ENCODE measurements at regions of chr1 and their contacts with region 1.

Region 1: DNA sequence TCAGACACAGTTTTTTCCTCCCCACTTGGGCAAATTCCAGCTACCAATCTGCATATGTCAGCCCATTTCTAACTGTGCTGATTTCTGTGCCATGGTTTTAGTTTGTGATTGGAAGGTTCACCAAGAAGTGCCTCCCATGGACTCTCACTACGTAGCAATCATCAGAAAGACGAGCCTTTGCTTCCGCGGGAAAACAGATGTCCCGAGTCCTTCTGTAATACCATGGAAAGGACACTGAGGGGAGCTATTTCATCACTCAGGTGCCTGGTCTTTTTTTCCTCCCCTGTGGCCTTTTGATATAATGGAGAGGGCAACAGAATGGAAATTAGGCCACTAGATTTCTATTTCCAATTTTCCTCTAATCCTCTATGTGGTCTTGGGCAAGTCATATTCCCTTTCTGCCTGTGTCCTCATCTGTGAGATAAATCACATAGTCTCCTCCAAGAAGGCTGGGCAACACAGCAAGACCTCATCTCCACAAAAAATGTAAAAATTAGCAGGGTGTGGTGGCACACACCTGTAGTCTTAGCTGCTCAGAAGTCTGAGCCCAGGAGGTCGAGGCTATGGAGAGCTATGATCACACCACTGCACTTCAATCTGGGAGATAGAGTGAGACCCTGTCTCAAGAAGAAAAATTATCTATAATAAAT is 24.8 kb downstream of the LEMD1 start:
- DNase-seq: peak; percentile 19
- H3K4me3 ChIP-seq: no peak overlapping the region
- H3K27ac ChIP-seq: no peak overlapping the region
- H3K4me1 ChIP-seq: no peaks in the 10 kb centered on the region
- H3K27me3 ChIP-seq: peaks cover 7% of the 10 kb centered on the region
- CTCF ChIP-seq: peak; percentile 52 to 86 (median 73)
- EP300 ChIP-seq: no peak
- POLR2A ChIP-seq: no peak

Region 2: DNA sequence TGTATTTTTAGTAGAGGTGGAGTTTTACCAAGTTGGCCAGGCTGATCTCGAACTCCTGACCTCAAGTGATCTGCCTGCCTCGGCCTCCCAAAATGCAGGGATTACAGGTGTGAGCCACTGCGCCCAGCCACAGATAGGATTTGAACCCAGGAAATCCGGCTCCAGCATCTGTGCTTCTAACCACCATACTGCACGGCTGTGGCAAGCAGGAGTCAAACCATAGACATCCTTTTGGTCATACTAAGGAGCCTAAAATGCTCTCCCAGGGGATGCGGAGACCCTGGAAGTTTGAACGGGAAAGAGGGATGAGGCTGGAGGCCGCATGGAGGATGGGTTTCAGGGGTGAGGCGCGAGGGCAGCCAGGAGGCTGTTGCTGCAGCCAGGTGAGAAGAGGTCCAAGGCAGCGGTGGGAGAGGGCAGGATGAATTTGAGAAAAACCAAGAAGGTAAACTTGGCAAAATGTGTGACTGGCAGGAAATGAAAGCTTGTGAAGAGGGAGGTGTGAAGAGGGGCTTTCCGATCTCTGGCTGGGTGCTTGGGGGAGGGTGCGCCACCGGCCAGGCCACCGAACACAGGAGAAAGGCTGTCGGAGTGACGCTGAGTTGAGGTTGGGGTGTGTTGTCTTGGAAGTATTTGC is 83.4 kb after region 1 on chr1:
- in situ Hi-C with region 1: loop called in 1 of 4 experiments (anchors 10 kb)
- intact Hi-C with region 1: loop called (anchors 5 kb)
- DNase-seq: no peak
- H3K4me3 ChIP-seq: no peak overlapping the region
- H3K27ac ChIP-seq: no peak overlapping the region
- H3K4me1 ChIP-seq: peaks cover 0 to 15% (median 10%) of the 10 kb centered on the region in 4 donors
- H3K27me3 ChIP-seq: peaks cover 27% of the 10 kb centered on the region
- CTCF ChIP-seq: no peak
- EP300 ChIP-seq: no peak
- POLR2A ChIP-seq: no peak

Region 3: DNA sequence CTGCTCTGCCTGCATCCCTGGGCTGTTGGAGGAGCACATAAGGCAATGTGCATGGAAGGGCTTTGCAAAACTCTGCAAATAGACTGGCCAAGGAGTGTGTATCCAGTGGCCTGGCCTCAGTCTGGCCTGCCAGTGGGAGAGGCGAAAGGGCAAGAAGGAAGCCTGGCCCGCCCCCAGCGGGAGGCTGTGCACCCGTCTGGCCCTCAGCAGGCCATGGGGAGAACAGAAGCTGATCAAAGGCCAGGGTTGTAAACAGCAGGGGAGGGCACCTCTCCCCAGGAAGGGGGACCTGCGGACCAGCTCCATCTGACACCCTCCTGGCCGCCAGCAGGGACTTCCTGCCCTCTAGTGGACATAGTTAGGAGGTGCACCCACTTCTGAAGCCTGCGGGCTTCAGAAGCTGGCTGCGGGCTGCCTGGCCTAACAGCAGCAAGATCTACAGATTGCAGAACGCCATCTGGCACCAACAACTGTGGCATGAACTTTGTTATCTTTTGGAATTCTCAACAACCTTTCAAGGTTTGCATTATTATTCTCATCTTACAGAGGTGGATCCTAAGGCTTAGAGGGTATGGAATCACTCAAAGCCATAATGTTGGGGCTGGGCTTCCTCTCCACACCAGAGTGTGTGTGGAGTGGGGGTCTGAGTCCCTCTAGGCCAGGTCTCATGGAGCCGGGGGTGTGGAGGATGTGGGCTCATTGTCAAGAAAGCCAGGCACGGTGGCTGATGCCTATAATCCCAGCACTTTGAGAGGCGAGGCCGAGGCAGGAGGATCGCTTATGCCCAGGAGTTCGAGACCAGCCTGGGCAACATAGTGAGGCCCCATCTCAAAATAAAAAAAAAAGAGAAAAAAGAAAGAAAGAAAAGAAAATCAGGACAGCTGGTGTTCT is 88.5 kb after region 1 on chr1:
- in situ Hi-C with region 1: loop called in 1 of 4 experiments (anchors 10 kb)
- intact Hi-C with region 1: loop called (anchors 5 kb)
- DNase-seq: peak; percentile 67
- H3K4me3 ChIP-seq: no peak overlapping the region
- H3K27ac ChIP-seq: no peak overlapping the region
- H3K4me1 ChIP-seq: peaks cover 0 to 7% (median 2%) of the 10 kb centered on the region in 4 donors
- H3K27me3 ChIP-seq: peaks cover 22% of the 10 kb centered on the region
- CTCF ChIP-seq: peak; percentile 90 to 98 (median 97)
- EP300 ChIP-seq: no peak
- POLR2A ChIP-seq: no peak

Region 4: GRCh38 chr1:205528887-205529825 is 132.1 kb after region 1 on chr1:
- in situ Hi-C with region 1: loop called in 1 of 4 experiments (anchors 10 kb)
- intact Hi-C with region 1: no loop called
- DNase-seq: peak; percentile 85
- H3K4me3 ChIP-seq: peak overlapping the region in 2 of 4 donors; percentile 15 to 30
- H3K27ac ChIP-seq: no peak overlapping the region
- H3K4me1 ChIP-seq: peaks cover 0 to 5% (median 2%) of the 10 kb centered on the region in 4 donors
- H3K27me3 ChIP-seq: no peaks in the 10 kb centered on the region
- CTCF ChIP-seq: peak; percentile 89 to 96 (median 95)
- EP300 ChIP-seq: no peak
- POLR2A ChIP-seq: no peak

Region 5: DNA sequence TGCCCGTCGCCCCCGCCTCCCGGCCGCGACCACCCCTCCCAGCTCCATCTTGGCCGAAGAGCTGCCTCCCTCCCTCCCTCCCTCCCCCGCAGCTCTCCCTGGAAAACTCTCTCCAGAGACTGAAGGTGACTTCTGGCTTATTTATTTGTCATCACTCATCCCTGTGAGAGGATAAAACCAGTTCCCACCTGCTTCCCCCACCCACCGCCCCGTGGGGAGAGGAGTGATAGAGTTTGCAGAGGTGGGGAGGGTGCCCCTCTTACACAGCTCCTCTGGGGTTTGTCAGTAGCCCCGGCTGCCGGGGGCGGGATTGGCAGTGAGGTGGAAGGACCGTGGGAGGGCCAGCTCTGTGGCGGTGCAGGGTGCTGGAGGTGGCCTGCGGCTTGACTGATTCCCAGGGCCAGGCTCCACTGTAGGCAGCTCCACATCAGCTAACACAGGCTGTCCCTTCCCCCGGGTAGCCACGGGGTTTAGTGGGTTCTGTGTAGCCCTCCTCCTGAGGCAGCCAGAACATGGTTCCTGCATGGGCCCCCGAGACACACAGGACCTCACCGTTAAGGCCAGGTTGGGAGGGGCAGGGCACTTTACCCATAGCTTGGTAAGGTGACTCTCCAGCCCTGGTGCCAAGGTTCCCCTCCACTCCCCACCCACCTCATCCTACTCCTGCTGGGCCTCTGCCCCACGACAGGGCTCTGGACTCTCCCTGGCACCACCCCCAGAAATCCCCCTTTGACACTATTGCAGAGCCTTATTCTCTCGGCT is 172.5 kb after region 1 on chr1:
- in situ Hi-C with region 1: no loop called
- intact Hi-C with region 1: no loop called
- DNase-seq: peak; percentile 20
- H3K4me3 ChIP-seq: peak overlapping the region in 3 of 4 donors; percentile 37 to 51 (median 44)
- H3K27ac ChIP-seq: peak overlapping the region in 3 of 4 donors; percentile 38 to 58 (median 56)
- H3K4me1 ChIP-seq: peaks cover 0 to 24% (median 14%) of the 10 kb centered on the region in 4 donors
- H3K27me3 ChIP-seq: peaks cover 40% of the 10 kb centered on the region
- CTCF ChIP-seq: no peak
- EP300 ChIP-seq: no peak
- POLR2A ChIP-seq: no peak

Region 6: GRCh38 chr1:205714197-205714905 is 317.3 kb after region 1 on chr1:
- in situ Hi-C with region 1: no loop called
- intact Hi-C with region 1: no loop called
- DNase-seq: no peak
- H3K4me3 ChIP-seq: no peak overlapping the region
- H3K27ac ChIP-seq: no peak overlapping the region
- H3K4me1 ChIP-seq: peaks cover 0 to 43% (median 24%) of the 10 kb centered on the region in 4 donors
- H3K27me3 ChIP-seq: no peaks in the 10 kb centered on the region
- CTCF ChIP-seq: no peak
- EP300 ChIP-seq: no peak
- POLR2A ChIP-seq: no peak